B cell (primary cell): ENCODE measurements at regions of chr16 and their contacts with region 1.

Region 1: GRCh38 chr16:68506331-68507053 is 32.6 kb upstream of the ZFP90 start:
- DNase-seq: no peak
- ATAC-seq: no peak
- H3K4me3 ChIP-seq: no peak overlapping the region
- H3K4me3 Mint-ChIP-seq: no peak overlapping the region
- H3K27ac ChIP-seq: no peak overlapping the region
- H3K27ac Mint-ChIP-seq: no peak overlapping the region
- H3K4me1 ChIP-seq: peaks cover 5 to 9% of the 10 kb centered on the region in 2 donors
- H3K4me1 Mint-ChIP-seq: peaks cover 2% of the 10 kb centered on the region
- H3K27me3 ChIP-seq: peaks cover 0 to 8% (median 3%) of the 10 kb centered on the region in 4 experiments
- H3K27me3 Mint-ChIP-seq: no peaks in the 10 kb centered on the region
- CTCF ChIP-seq: no peak

Region 2: GRCh38 chr16:68396481-68396880 is 110.0 kb before region 1 on chr16:
- CTCF ChIA-PET with region 1: interaction called, 28 read pairs
- POLR2A ChIA-PET with region 1: interaction called, 3 read pairs
- intact Hi-C with region 1: no loop called
- DNase-seq: peak; percentile 58
- ATAC-seq: no peak
- H3K4me3 ChIP-seq: no peak overlapping the region
- H3K4me3 Mint-ChIP-seq: no peak overlapping the region
- H3K27ac ChIP-seq: no peak overlapping the region
- H3K27ac Mint-ChIP-seq: no peak overlapping the region
- H3K4me1 ChIP-seq: no peaks in the 10 kb centered on the region
- H3K4me1 Mint-ChIP-seq: peaks cover 2% of the 10 kb centered on the region
- H3K27me3 ChIP-seq: no peaks in the 10 kb centered on the region
- H3K27me3 Mint-ChIP-seq: no peaks in the 10 kb centered on the region
- CTCF ChIP-seq: peak; percentile 61

Region 3: GRCh38 chr16:68401871-68402747 is 104.4 kb before region 1 on chr16:
- CTCF ChIA-PET with region 1: interaction called, 28 read pairs
- POLR2A ChIA-PET with region 1: no interaction called
- intact Hi-C with region 1: no loop called
- DNase-seq: no peak
- ATAC-seq: no peak
- H3K4me3 ChIP-seq: no peak overlapping the region
- H3K4me3 Mint-ChIP-seq: no peak overlapping the region
- H3K27ac ChIP-seq: no peak overlapping the region
- H3K27ac Mint-ChIP-seq: peak overlapping the region; percentile 16
- H3K4me1 ChIP-seq: no peaks in the 10 kb centered on the region
- H3K4me1 Mint-ChIP-seq: no peaks in the 10 kb centered on the region
- H3K27me3 ChIP-seq: peaks cover 0 to 3% (median 0%) of the 10 kb centered on the region in 4 experiments
- H3K27me3 Mint-ChIP-seq: peaks cover 4% of the 10 kb centered on the region
- CTCF ChIP-seq: no peak